Right ventricle myocardium superior (tissue), 1 donor: ENCODE measurements at regions of chr4 and their contacts with region 1.

Region 1: DNA sequence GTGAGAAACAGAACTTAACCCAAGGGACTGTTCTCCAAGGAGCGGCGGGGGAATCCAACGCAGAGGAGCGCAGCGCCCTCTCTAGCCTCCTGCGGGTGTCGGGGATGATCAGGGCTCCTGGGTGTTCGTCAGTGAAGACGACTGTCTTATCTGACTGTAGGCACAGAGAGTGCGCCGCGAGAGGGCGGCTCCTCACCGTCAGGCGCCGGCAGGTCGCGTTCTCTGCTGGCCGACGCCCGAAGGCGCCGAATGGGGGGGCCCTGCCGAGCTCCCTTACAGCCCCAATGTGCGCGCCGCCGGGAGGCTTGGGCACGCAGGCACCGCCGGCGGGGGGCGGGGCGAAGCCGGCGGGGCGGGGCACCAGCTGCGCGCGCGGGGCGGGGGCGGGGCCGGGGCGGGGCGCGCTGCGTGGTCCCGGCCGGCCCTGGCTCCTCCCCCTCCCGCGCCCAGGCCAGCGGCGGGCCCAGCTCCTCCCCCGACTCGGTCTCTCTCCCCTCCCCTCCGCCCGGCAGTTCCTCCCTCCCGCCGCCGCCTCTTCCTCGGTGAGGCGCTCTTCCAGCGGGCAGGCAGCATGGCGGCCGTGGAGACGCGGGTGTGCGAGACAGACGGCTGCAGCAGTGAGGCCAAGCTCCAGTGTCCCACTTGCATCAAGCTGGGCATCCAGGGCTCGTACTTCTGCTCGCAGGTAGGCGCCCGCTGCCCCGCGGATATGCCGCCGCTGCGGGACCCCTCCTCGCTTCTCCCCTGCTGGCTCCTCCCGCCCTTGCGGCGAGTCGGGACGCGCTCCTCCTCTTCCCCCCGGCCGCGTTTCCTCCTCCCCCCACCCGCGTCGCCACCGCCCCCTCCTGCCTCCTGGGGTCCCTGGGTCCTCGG is at the start of gene METAP1:
- DNase-seq: peak; percentile 96
- ATAC-seq: peak; percentile 95
- total RNA-seq, gene METAP1: 57.5 TPM

Region 2: GRCh38 chr4:98745366-98745765 is 250.1 kb before region 1 on chr4:
- intact Hi-C with region 1: no loop called
- DNase-seq: no peak
- ATAC-seq: no peak

Region 3: GRCh38 chr4:98939892-98940298 is 55.5 kb before region 1 on chr4:
- intact Hi-C with region 1: loop called (anchors 2 kb)
- DNase-seq: no peak
- ATAC-seq: peak; percentile 72

Region 4: DNA sequence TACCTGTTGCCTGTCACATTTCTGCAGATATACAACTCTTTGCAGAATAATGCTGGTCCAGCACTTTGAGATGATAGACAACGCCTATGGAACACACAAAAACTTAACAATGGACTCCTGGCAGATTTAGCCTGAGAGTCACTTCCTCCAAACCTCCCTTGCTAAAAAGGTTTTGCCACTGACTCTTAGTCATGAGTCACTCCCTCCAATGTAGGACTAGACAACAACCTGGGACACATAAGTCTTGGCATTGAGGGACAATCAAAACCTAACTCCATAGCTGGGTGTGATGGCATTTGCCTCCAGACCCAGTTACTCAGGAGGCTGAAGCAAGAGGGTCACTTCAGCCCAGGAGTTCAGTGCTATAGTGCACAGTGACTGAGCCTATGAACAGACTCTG is 44.5 kb before region 1 on chr4:
- intact Hi-C with region 1: no loop called
- DNase-seq: no peak
- ATAC-seq: no peak

Region 5: DNA sequence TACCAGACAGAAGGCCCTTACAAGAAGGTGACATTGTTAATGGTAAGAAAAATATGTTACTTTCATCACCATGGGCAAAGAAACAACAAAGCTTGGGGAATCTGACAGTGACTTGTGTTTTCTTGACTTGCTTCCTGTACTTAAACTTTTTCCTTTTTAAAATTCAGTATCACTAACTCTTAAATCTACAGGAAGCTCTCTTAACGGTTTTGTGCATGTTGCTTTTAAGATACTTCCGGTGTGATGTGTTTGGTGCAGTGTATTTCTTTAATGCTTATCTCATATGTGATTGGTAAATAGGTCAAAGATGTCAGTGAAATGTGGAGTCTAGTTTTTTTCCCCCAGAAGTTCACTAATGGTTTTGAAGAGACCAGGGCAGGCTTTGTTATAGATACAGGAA is 47.9 kb after region 1 on chr4:
- intact Hi-C with region 1: no loop called
- DNase-seq: no peak
- ATAC-seq: no peak

Region 6: GRCh38 chr4:99061048-99061700 is 65.8 kb after region 1 on chr4:
- intact Hi-C with region 1: loop called (anchors 2 kb)
- DNase-seq: no peak
- ATAC-seq: no peak